Tibial artery (tissue), 4 donors: ENCODE measurements at regions of chr9 and their contacts with region 1.

Region 1: DNA sequence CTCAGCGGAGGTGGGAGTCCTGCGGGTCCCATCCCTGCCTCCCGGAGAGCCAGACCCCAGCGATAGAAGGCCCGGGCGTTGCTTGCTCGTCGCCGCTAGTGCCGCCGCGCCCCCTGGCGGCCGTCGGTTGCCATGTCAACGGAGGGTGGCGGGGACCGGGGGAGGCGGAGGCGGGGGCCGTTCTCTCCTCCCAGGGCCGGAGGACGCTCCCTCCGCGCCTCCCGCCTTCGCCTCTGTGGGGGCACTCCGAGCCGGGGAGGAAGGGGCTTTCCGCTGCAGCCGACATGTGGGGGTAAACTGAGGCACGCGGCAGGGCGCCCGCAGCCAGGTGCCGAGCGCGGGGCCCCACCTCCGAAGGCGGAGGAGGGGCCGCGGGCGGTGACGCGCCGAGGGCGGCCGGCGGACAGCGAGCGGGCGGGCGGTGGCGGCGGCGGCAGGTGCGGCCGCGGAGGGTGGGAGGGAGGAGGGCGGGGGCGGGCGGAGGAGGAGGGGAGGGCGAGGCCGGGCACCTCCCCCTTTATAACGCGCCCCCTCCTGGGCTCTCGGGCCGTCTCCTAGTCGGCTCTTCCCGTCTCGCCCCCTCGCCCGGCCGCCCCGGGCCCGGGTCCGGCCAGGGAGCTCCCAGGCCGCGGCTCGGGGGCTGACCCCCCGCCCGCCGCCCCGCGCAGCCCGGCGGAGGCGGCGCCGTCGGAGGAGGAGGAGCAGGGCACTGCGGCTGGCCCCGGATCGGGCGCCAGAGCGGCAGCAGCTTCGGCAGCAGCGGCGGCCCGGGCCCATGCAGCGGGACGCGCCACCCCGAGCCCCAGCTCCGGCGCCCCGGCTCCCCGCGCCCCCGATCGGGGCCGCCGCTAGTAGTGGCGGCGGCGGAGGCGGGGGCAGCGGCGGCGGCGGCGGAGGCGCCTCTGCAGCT is 556 bp upstream of the CDK9 start:
- DNase-seq: peak; percentile 81 to 93
- H3K4me3 ChIP-seq: peak overlapping the region; percentile 72 to 85
- H3K27ac ChIP-seq: peak overlapping the region; percentile 82 to 91
- H3K4me1 ChIP-seq: peaks cover 0 to 30% (median 20%) of the 10 kb centered on the region in 4 donors
- H3K27me3 ChIP-seq: no peaks in the 10 kb centered on the region
- CTCF ChIP-seq: peak; percentile 88 to 96

Region 2: GRCh38 chr9:127707726-127708147 is 77.5 kb before region 1 on chr9:
- intact Hi-C with region 1: no loop called
- DNase-seq: no peak
- H3K4me3 ChIP-seq: no peak overlapping the region
- H3K27ac ChIP-seq: no peak overlapping the region
- H3K4me1 ChIP-seq: no peaks in the 10 kb centered on the region
- H3K27me3 ChIP-seq: peaks cover 0 to 31% of the 10 kb centered on the region in 2 donors
- CTCF ChIP-seq: no peak

Region 3: GRCh38 chr9:127734747-127735529 is 50.3 kb before region 1 on chr9 and contains the start of gene TOR2A:
- intact Hi-C with region 1: loop called (anchors 2 kb)
- DNase-seq: peak; percentile 94 to 98
- H3K4me3 ChIP-seq: peak within 1 kb of the TSS; percentile 69 to 75
- H3K27ac ChIP-seq: peak within 1 kb of the TSS; percentile 93
- H3K4me1 ChIP-seq: peaks cover 0 to 13% (median 7%) of the 10 kb centered on the region in 4 donors
- H3K27me3 ChIP-seq: no peaks in the 10 kb centered on the region
- CTCF ChIP-seq: peak; percentile 92 to 99

Region 4: DNA sequence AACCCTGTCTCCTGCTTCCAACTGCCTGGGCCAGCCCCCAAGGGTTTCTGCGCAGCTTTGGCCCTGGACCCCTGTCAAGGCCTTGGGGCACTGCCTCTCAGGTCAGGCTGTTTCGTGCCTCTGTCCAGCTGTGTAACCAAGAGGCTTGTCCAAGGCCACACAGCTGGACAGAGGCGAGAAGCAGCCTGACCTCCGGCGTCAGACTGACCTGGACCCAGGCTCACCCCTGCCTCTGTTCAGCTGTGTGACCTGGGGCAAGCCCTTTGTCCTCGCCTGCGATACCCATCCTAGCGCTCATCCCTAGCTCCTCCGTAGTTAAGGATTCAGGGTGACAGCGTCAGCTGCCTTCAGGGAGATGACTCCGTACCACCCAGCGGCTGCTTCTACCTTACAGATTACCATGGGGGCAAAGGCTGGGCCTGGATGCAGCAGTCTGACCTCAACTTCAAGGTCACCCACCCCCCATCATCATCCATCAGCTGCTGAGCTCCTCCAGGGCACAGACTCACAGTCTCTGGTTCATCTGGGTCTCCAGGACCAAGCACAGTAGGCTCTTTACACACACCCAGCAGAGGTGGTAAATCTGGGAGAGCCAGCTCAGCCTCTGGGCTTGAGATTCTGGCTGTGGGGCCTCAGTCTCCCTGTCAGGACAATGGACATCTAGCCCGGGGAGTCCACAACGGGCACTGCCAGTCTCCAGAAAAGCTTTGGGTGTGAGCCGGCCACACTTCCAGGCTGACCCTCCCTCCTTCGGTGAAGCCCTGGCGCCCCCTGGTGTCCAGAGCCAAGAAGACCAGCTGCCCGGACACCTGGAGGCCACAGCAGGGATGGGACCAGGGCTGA is 84.3 kb after region 1 on chr9:
- intact Hi-C with region 1: loop called (anchors 5 kb)
- DNase-seq: peak; percentile 90 to 93
- H3K4me3 ChIP-seq: no peak overlapping the region
- H3K27ac ChIP-seq: peak overlapping the region in 1 of 2 donors; percentile 20
- H3K4me1 ChIP-seq: peaks cover 0 to 17% (median 15%) of the 10 kb centered on the region in 4 donors
- H3K27me3 ChIP-seq: no peaks in the 10 kb centered on the region
- CTCF ChIP-seq: peak; percentile 82 to 95

Region 5: GRCh38 chr9:127899128-127899946 is 114.1 kb after region 1 on chr9 and contains the start of gene ST6GALNAC6:
- intact Hi-C with region 1: no loop called
- DNase-seq: peak in 1 of 2 donors; percentile 88
- H3K4me3 ChIP-seq: peak within 1 kb of the TSS; percentile 96 to 98
- H3K27ac ChIP-seq: peak within 1 kb of the TSS; percentile 99
- H3K4me1 ChIP-seq: peaks cover 0 to 67% (median 54%) of the 10 kb centered on the region in 4 donors
- H3K27me3 ChIP-seq: no peaks in the 10 kb centered on the region
- CTCF ChIP-seq: no peak